WTC11 (cell line): ENCODE measurements at regions of chr11 and their contacts with region 1.

Region 1: GRCh38 chr11:64742889-64743590 is 902 bp downstream of the RASGRP2 start:
- DNase-seq: peak; percentile 83
- ATAC-seq: peak; percentile 12
- H3K4me3 Mint-ChIP-seq: peak overlapping the region; percentile 69; the same call in 1 of the 2 replicates
- H3K27ac Mint-ChIP-seq: no peak overlapping the region
- H3K4me1 Mint-ChIP-seq: peaks cover 39% of the 10 kb centered on the region
- H3K27me3 Mint-ChIP-seq: peaks cover 37% of the 10 kb centered on the region
- CTCF ChIP-seq: peak; percentile 99

Region 2: DNA sequence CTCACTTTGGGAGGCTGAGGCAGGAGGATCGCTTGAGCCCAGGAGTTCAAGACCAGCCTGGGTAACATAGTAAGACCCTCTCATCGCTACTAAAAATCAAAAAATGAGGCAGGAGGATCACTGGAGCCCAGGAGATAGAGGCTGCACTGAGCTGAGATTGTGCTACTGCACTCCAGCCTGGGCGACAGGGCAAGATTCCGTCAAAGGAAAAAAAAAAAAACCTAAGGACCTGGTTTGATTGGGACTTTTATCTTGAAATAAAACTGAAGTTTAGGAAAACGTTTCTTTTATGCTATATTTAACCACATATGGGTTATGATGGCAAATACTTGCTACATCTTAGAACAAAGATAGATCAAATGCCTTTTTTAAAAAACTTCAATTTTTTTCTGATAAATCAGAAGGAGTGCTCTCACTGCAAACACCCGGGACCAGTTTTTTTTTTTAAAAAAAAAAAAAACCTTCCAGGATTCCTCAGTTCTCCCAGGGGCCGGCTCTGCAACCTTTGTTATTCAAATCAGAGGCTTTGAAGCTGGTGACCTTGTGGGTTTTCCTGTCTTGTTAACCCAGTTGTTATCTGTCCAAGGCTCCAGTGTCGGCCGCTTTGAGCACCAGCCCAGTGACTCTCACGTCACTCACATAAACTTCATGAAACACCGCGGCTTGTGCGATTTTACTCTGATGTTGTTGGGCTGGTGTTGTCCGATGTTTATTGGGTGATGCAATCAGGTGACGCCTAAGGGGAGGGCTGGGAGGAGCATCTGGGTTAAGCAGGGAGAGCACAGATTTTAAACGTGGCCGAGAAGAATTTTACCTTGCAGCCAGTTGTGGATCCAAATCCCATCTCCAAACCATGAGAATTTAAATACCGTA is 176.8 kb before region 1 on chr11:
- CTCF ChIA-PET with region 1: interaction called, 10 read pairs
- POLR2A ChIA-PET with region 1: no interaction called
- DNase-seq: peak; percentile 59
- ATAC-seq: peak; percentile 45
- H3K4me3 Mint-ChIP-seq: peak overlapping the region; percentile 64
- H3K27ac Mint-ChIP-seq: peak overlapping the region; percentile 99
- H3K4me1 Mint-ChIP-seq: peaks cover 28% of the 10 kb centered on the region
- H3K27me3 Mint-ChIP-seq: no peaks in the 10 kb centered on the region
- CTCF ChIP-seq: no peak

Region 3: GRCh38 chr11:64659417-64660144 is 83.5 kb before region 1 on chr11:
- CTCF ChIA-PET with region 1: interaction called, 10 read pairs
- POLR2A ChIA-PET with region 1: interaction called, 3 read pairs
- DNase-seq: no peak
- ATAC-seq: no peak
- H3K4me3 Mint-ChIP-seq: no peak overlapping the region
- H3K27ac Mint-ChIP-seq: no peak overlapping the region
- H3K4me1 Mint-ChIP-seq: 0 out of 2 replicates have a peak, but pooled peaks cover 2% of the 10 kb centered on the region
- H3K27me3 Mint-ChIP-seq: peaks cover 3% of the 10 kb centered on the region; the same call in 1 of the 2 replicates
- CTCF ChIP-seq: no peak

Region 4: GRCh38 chr11:64713031-64713780 is 29.8 kb before region 1 on chr11:
- CTCF ChIA-PET with region 1: interaction called, 20 read pairs
- POLR2A ChIA-PET with region 1: interaction called, 3 read pairs
- DNase-seq: peak; percentile 39
- ATAC-seq: 0 out of 2 replicates have a peak, but pooled peaks have one; percentile 1
- H3K4me3 Mint-ChIP-seq: no peak overlapping the region
- H3K27ac Mint-ChIP-seq: no peak overlapping the region
- H3K4me1 Mint-ChIP-seq: peaks cover 57% of the 10 kb centered on the region
- H3K27me3 Mint-ChIP-seq: peaks cover 73% of the 10 kb centered on the region
- CTCF ChIP-seq: no peak

Region 5: GRCh38 chr11:64729851-64730382 is 13.1 kb before region 1 on chr11:
- CTCF ChIA-PET with region 1: interaction called, 43 read pairs
- POLR2A ChIA-PET with region 1: interaction called, 4 read pairs
- DNase-seq: peak; percentile 92
- ATAC-seq: peak; percentile 88
- H3K4me3 Mint-ChIP-seq: peak overlapping the region; percentile 37
- H3K27ac Mint-ChIP-seq: peak overlapping the region; percentile 97
- H3K4me1 Mint-ChIP-seq: peaks cover 44% of the 10 kb centered on the region
- H3K27me3 Mint-ChIP-seq: peaks cover 8% of the 10 kb centered on the region; the same call in 1 of the 2 replicates
- CTCF ChIP-seq: no peak

Region 6: GRCh38 chr11:64778508-64779346 is 35.7 kb after region 1 on chr11 and contains the start of gene SF1:
- CTCF ChIA-PET with region 1: interaction called, 16 read pairs
- POLR2A ChIA-PET with region 1: interaction called, 8 read pairs
- DNase-seq: peak; percentile 98
- ATAC-seq: peak; percentile 95
- H3K4me3 Mint-ChIP-seq: peak within 1 kb of the TSS; percentile 79
- H3K27ac Mint-ChIP-seq: peak within 1 kb of the TSS; percentile 98
- H3K4me1 Mint-ChIP-seq: peaks cover 32% of the 10 kb centered on the region
- H3K27me3 Mint-ChIP-seq: no peaks in the 10 kb centered on the region
- CTCF ChIP-seq: no peak
- total RNA-seq, gene SF1: 285 to 314 TPM (median 300 TPM) in 3 replicates

Region 7: GRCh38 chr11:64803163-64803845 is 60.3 kb after region 1 on chr11 and contains the start of gene MAP4K2:
- CTCF ChIA-PET with region 1: interaction called, 14 read pairs
- POLR2A ChIA-PET with region 1: no interaction called
- DNase-seq: peak; percentile 90
- ATAC-seq: peak; percentile 86
- H3K4me3 Mint-ChIP-seq: peak within 1 kb of the TSS; percentile 92
- H3K27ac Mint-ChIP-seq: peak within 1 kb of the TSS; percentile 99
- H3K4me1 Mint-ChIP-seq: peaks cover 11% of the 10 kb centered on the region
- H3K27me3 Mint-ChIP-seq: no peaks in the 10 kb centered on the region
- CTCF ChIP-seq: no peak
- total RNA-seq, gene MAP4K2: 24.5 to 31.6 TPM (median 28.3 TPM) in 3 replicates

Region 8: GRCh38 chr11:65095974-65096806 is 353.1 kb after region 1 on chr11 and contains the start of gene VPS51:
- CTCF ChIA-PET with region 1: no interaction called
- POLR2A ChIA-PET with region 1: no interaction called
- DNase-seq: peak; percentile 91
- ATAC-seq: peak; percentile 98
- H3K4me3 Mint-ChIP-seq: peak within 1 kb of the TSS; percentile 90
- H3K27ac Mint-ChIP-seq: peak within 1 kb of the TSS; percentile 99
- H3K4me1 Mint-ChIP-seq: peaks cover 6% of the 10 kb centered on the region
- H3K27me3 Mint-ChIP-seq: no peaks in the 10 kb centered on the region
- CTCF ChIP-seq: no peak
- total RNA-seq, gene VPS51: 122 to 136 TPM (median 123 TPM) in 3 replicates